ENCODE measurements at regions of chr16 and their contacts with region 1.

Region 1: GRCh38 chr16:66539623-66540469 is 10.1 kb downstream of the TK2 start:
- DNase-seq: no peak
- ATAC-seq: peak; percentile 21; the same call in 2 of the 3 replicates
- H3K4me3 ChIP-seq: no peak overlapping the region
- H3K27ac ChIP-seq: peak overlapping the region; percentile 5
- H3K4me1 ChIP-seq: peaks cover 13% of the 10 kb centered on the region
- H3K27me3 ChIP-seq: no peaks in the 10 kb centered on the region
- CTCF ChIP-seq: no peak
- EP300 ChIP-seq: no peak
- POLR2A ChIP-seq: no peak
- RAD21 ChIP-seq: no peak

Region 2: DNA sequence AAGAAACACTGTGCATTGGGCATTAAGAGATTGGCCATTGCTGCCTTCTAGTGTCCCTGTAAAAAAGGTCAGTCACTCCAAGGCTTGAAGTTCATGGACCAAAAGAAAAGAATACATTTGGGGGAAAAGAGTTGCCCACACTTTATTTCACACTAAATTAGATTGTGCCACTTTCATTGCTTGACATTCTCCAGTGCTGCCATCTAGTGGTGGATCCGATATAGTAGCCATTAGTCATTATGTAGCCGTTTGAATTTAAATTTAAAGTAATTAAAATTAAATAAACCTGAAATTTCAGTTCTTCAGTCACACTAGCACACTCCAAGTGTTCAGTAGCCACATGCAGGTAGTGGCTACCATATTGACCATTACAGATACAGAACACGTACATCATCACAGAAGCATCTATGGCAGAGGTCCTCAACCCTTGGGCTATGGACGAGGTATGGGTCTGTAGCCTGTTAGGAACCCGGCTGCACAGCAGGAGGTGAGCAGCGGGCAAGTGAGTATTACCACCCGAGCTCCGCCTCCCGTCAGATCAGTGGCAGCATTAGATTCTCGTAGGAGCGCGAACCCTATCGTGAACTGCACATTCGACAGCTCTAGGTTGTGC is 195.2 kb before region 1 on chr16:
- CTCF ChIA-PET with region 1: no interaction called
- POLR2A ChIA-PET with region 1: no interaction called
- in situ Hi-C with region 1: no loop called
- intact Hi-C with region 1: no loop called
- DNase-seq: peak; percentile 29
- ATAC-seq: no peak
- H3K4me3 ChIP-seq: no peak overlapping the region
- H3K27ac ChIP-seq: no peak overlapping the region
- H3K4me1 ChIP-seq: no peaks in the 10 kb centered on the region
- H3K27me3 ChIP-seq: peaks cover 0 to 19% of the 10 kb centered on the region in 2 experiments; a peak in 1 of 5 replicates
- CTCF ChIP-seq: peak; percentile 65
- EP300 ChIP-seq: no peak
- POLR2A ChIP-seq: no peak
- RAD21 ChIP-seq: no peak

Region 3: GRCh38 chr16:67872786-67873537 is 1333.1 kb after region 1 on chr16 and contains the start of gene EDC4:
- CTCF ChIA-PET with region 1: no interaction called
- POLR2A ChIA-PET with region 1: no interaction called
- in situ Hi-C with region 1: no loop called
- intact Hi-C with region 1: loop called (anchors 5 kb)
- DNase-seq: peak; percentile 65
- ATAC-seq: peak; percentile 87
- H3K4me3 ChIP-seq: peak within 1 kb of the TSS; percentile 85 to 98 (median 87)
- H3K27ac ChIP-seq: peak within 1 kb of the TSS; percentile 66
- H3K4me1 ChIP-seq: peaks cover 30% of the 10 kb centered on the region
- H3K27me3 ChIP-seq: no peaks in the 10 kb centered on the region; a peak in 1 of 5 replicates
- CTCF ChIP-seq: peak; percentile 43
- EP300 ChIP-seq: peak in 1 of 2 experiments; percentile 71; a peak in 3 of 4 replicates
- POLR2A ChIP-seq: peak; percentile 68 to 87
- RAD21 ChIP-seq: peak; percentile 83
- total RNA-seq, gene EDC4: 53.4 and 59.1 TPM in 2 replicates